ENCODE measurements at regions of chr4 and their contacts with region 1.

Region 1: DNA sequence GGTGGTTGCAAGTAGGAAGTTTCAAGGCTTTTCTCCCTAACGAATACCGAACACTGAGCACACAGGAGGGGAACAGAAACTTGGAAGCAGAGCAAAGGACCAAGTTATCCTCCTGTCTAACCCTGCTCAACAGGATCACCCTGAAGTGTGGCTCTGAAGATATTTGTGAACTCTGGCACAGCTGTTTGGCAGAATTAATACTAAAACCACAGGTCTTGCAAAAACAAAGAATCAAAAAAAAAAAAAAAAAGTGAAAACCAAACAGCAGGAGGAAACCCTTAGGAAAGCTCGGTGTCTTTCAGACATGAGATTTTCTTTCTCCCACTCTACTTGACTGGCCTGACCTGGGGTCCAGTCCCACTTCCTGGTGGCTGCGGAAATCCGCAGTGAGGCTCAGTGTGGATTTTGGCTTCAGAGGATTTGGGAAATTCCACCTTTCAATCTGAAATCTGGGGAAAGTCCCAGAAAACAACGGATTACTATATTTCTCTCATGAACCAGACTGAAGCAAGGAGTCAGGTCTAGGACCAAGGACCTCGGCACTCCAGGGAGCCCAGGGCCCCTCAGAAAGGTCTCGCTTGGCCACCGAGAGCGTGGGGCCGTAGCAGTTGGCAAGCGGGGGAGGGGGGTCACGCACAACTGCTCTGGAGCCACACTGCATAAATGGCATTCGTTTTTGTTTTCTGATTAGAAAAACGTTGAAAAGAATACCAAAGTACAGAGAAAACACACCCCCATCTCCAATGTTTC is 867 bp downstream of the TIFA start:
- DNase-seq: peak; percentile 42
- H3K4me3 Mint-ChIP-seq: peak overlapping the region; percentile 81
- H3K27ac Mint-ChIP-seq: peak overlapping the region; percentile 88
- H3K4me1 Mint-ChIP-seq: peaks cover 21% of the 10 kb centered on the region
- H3K27me3 Mint-ChIP-seq: no peaks in the 10 kb centered on the region
- CTCF ChIP-seq: no peak

Region 2: GRCh38 chr4:112266821-112267220 is 18.0 kb before region 1 on chr4:
- CTCF ChIA-PET with region 1: interaction called, 5 read pairs
- POLR2A ChIA-PET with region 1: interaction called, 11 read pairs
- intact Hi-C with region 1: no loop called
- DNase-seq: peak; percentile 33
- H3K4me3 Mint-ChIP-seq: no peak overlapping the region
- H3K27ac Mint-ChIP-seq: no peak overlapping the region
- H3K4me1 Mint-ChIP-seq: peaks cover 14% of the 10 kb centered on the region
- H3K27me3 Mint-ChIP-seq: no peaks in the 10 kb centered on the region
- CTCF ChIP-seq: peak; percentile 31

Region 3: DNA sequence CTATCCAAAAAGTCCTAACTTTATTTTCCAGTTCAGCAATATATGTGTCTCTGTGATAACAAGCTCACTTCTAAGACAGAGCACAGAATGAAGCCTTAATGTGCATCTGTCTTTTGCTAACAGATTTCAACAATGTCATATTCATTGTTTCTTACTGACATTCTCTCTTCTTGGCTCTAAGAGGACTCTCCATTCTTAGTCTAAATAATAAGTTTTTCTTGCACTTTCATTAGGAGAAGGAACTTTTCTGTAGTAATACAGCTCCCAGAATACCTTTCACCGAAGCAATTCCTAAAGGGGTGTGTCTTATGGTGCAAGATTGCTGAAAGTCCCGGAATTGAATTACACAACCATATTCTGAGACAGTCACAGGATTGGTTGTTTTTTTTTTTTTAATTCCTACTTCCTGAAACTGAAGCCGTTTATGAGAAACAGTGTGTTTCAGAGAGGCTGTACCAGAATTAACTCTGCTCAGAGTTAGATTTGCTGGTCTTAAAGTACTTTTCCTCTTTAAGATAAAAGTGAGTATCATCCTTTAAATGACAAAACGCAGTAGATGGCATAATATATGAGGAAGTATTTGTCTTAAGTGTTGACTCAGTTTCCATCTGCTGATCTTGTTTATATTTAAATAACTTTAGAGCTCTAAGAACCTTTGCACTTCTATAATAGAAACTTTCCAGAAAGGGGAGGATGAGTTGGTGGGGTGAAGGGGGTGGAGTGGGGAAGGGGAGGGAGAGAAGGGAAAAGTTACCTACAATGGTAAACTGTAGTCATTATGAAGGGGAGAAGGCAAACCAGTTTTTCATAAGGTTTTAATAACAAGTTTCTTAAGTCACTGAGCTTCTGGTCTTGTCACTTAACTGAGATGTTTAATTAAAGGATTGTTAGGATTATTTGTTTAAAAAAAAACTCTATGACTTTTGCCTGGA is 12.4 kb after region 1 on chr4 and contains the start of gene ALPK1:
- CTCF ChIA-PET with region 1: interaction called, 18 read pairs
- POLR2A ChIA-PET with region 1: interaction called, 106 read pairs
- intact Hi-C with region 1: no loop called
- DNase-seq: peak; percentile 92
- H3K4me3 Mint-ChIP-seq: peak within 1 kb of the TSS; percentile 72
- H3K27ac Mint-ChIP-seq: peak within 1 kb of the TSS; percentile 91
- H3K4me1 Mint-ChIP-seq: no peaks in the 10 kb centered on the region
- H3K27me3 Mint-ChIP-seq: no peaks in the 10 kb centered on the region
- CTCF ChIP-seq: no peak
- total RNA-seq, gene ALPK1: 20.3 and 41.0 TPM in 2 replicates

Region 4: GRCh38 chr4:112348488-112349158 is 63.8 kb after region 1 on chr4:
- CTCF ChIA-PET with region 1: no interaction called
- POLR2A ChIA-PET with region 1: no interaction called
- intact Hi-C with region 1: no loop called
- DNase-seq: peak; percentile 57
- H3K4me3 Mint-ChIP-seq: peak overlapping the region; percentile 53
- H3K27ac Mint-ChIP-seq: peak overlapping the region; percentile 29
- H3K4me1 Mint-ChIP-seq: peaks cover 8% of the 10 kb centered on the region
- H3K27me3 Mint-ChIP-seq: no peaks in the 10 kb centered on the region
- CTCF ChIP-seq: no peak

Measured in MCF 10A (cell line).